Activated B cell treated with CpG ODN at 0.5 μM for 24 hours (primary cell): ENCODE measurements at regions of chrX and their contacts with region 1.

Region 1: GRCh38 chrX:18674788-18675735 is 3.2 kb upstream of the RS1 start:
- DNase-seq: peak; percentile 75
- ATAC-seq: peak; percentile 88
- H3K4me3 Mint-ChIP-seq: peak overlapping the region; percentile 82
- H3K27ac Mint-ChIP-seq: peak overlapping the region; percentile 85
- H3K4me1 Mint-ChIP-seq: peaks cover 12% of the 10 kb centered on the region
- H3K27me3 Mint-ChIP-seq: no peaks in the 10 kb centered on the region
- CTCF ChIP-seq: no peak

Region 2: DNA sequence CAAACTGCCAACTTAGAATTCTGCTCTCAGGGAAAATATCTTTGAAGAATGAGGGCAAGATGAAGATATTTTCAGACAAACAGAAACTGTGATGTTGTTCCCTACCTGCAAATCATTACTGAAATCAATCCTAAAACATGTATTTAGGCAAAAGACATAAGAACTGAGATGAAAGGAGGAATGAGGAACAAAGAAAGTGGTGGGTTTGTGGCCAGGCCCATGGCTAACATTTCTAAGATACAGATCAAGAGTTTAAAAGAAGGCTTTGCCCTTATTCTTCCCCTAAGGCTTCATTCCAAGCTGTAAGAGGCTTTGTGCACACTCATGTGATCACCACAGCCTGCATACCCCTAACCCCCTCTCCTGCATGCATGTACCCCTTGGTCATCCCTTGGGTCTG is 400.7 kb after region 1 on chrX:
- CTCF ChIA-PET with region 1: no interaction called
- POLR2A ChIA-PET with region 1: no interaction called
- intact Hi-C with region 1: no loop called
- DNase-seq: no peak
- ATAC-seq: no peak
- H3K4me3 Mint-ChIP-seq: no peak overlapping the region
- H3K27ac Mint-ChIP-seq: no peak overlapping the region
- H3K4me1 Mint-ChIP-seq: no peaks in the 10 kb centered on the region
- H3K27me3 Mint-ChIP-seq: no peaks in the 10 kb centered on the region
- CTCF ChIP-seq: no peak

Region 3: GRCh38 chrX:19343535-19344408 is 668.7 kb after region 1 on chrX and contains the start of gene PDHA1:
- CTCF ChIA-PET with region 1: no interaction called
- POLR2A ChIA-PET with region 1: no interaction called
- intact Hi-C with region 1: loop called (anchors 1 kb)
- DNase-seq: peak; percentile 81
- ATAC-seq: peak; percentile 98
- H3K4me3 Mint-ChIP-seq: peak within 1 kb of the TSS; percentile 88
- H3K27ac Mint-ChIP-seq: peak within 1 kb of the TSS; percentile 83
- H3K4me1 Mint-ChIP-seq: peaks cover 14% of the 10 kb centered on the region
- H3K27me3 Mint-ChIP-seq: peaks cover 1% of the 10 kb centered on the region
- CTCF ChIP-seq: no peak
- total RNA-seq, gene PDHA1: 122 and 124 TPM in 2 replicates